ENCODE measurements at regions of chr17 and their contacts with region 1.

Region 1: DNA sequence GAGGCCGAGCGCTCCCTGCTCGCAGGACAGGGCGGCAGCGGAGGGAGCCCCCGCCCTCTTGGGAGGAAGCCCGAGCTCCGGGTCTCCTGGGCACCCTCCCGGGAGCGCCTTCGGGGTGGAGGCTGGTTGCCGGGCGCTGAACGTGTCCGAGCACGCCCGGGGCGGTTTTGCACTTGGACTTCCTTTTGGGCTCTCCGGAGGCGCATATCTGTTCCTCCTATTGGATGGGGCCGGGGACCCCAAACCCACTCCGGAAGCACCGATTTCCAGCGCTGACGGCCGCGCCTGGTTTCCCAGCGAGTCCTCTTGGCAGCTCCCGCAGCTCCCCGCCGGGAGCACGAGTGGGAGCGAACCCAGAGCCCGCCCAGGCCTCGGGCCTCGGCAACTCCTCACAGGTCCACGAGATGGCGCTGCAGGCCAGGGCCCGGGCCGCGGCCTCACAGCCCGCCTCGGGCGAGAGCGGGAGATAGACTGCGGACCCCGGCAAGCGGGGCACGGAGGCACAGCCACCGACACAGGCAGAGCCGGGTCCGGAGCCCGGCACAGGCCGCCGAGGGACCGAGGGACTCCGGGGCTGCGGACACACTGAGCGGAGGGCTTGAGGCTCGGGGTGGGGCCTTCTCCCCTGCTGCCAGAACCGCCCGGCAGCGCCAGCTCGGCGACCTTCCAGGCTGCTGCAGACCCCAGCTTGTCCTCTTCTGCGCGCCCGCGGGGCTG is 12.7 kb downstream of the TBX2 start:
- DNase-seq: peak; percentile 70 to 92
- H3K4me3 ChIP-seq: peak overlapping the region; percentile 66 to 74
- H3K27ac ChIP-seq: peak overlapping the region; percentile 98
- H3K4me1 ChIP-seq: peaks cover 0 to 76% (median 59%) of the 10 kb centered on the region in 4 donors
- H3K27me3 ChIP-seq: no peaks in the 10 kb centered on the region
- CTCF ChIP-seq: peak; percentile 98

Region 2: DNA sequence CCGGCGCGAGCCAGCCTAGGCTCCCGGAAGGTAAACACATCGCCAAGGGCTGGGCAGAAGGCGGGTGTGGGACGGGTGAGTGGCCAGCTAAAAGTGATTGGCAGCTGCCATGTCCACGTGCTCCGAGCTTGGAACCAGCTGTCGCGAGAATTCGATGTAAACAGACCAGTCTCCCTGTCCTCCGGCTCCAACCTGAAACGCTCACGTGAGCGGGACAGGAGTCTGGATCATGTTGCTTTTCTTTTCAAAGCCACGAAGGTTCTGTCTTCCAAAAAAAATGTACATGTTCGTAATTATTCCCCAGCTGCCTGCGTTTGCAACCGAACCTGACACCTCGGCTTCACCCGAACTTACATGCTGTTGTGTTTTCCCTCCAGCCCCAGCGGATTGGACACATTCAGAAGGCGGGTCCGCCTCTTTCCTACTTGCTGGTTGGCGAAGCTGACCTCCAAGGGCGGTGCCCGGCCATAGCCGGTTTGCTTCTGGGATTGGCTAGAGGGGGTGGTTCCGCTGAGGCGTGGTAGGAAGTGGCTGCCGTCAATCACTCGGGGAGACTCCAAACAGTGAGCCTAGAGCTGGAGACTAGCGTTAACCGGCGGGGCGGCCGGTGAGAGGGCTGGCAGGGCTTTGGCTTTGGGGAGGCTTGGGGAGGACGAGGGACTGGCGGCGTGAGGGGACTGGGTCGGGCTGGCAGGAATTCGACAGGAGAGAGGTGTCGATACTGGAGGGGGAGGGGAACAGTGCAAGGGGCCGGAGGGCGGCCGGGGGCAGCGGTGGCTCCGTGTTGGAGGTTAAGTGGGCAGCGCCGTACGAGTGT is 734.8 kb before region 1 on chr17 and contains the start of gene BCAS3:
- intact Hi-C with region 1: loop called (anchors 5 kb)
- DNase-seq: peak; percentile 99
- H3K4me3 ChIP-seq: peak within 1 kb of the TSS; percentile 67 to 91
- H3K27ac ChIP-seq: peak within 1 kb of the TSS; percentile 78 to 85
- H3K4me1 ChIP-seq: peaks cover 0 to 15% (median 5%) of the 10 kb centered on the region in 4 donors
- H3K27me3 ChIP-seq: no peaks in the 10 kb centered on the region
- CTCF ChIP-seq: peak in 1 of 2 experiments; percentile 8

Region 3: DNA sequence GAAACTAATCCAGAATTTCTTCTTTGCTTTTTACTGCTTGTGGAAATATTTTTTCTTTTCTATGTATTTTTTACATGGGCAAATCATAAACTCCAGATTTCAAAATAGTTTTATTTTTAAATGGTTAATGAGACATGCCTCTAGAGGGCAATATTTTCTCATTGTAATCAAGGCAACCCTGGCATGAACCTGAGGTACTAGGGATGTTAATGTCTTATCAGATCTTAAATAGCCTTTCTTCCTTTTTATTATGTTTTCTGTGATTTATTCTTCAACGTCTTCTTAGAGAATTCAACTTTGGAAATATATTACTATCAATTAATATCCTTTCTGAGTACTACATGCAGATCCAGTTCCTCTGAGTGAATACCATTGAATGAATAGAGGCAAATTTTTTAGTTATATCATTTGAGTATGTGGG is 410.0 kb before region 1 on chr17:
- intact Hi-C with region 1: loop called (anchors 5 kb)
- DNase-seq: no peak
- H3K4me3 ChIP-seq: no peak overlapping the region
- H3K27ac ChIP-seq: no peak overlapping the region
- H3K4me1 ChIP-seq: peaks cover 0 to 10% (median 0%) of the 10 kb centered on the region in 4 donors
- H3K27me3 ChIP-seq: no peaks in the 10 kb centered on the region
- CTCF ChIP-seq: peak; percentile 56 to 58

Region 4: DNA sequence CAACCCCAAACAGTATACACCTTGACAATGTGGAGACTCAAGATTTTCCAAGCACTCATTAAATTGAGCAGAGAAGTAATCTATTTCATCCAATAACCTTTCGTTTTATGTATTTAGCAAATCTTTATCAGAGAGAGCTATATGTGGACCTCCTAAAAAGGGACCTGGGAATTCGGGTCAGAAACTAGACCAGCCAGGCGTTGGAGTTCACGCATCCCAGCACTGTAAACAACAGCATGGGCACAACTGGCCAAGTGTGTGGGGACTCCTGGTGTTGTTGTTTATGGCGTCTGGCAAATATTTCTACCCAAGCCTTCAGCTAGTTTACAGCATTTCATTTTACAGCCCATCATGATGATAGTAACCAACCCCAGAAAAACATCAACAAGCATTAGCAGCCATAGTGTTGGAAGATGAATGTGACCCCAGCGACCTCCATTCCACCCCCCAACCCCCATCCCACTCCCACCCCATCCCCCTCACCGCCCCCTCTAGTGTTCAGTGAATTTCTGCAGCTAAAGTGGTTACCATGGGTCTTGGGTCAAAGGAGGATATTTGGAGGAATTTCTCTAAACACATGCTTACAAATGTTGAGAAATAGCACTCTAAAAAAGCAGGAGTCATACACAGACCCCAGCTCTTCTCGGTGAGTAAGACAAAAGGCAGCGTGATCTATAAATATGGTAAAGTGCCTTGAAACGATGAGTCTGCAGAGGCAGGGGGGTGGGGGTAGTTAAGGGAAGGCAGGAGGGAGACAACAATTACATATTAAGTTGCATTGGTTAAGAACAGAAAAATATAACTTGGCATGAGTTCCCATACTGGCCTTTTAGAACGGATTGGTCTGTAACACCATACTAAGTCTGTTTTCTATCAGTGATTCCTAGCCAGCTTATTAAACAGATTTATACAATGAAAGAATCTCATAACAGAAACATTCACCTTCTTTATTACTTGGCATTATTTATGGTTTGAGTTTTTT is 104.1 kb before region 1 on chr17:
- intact Hi-C with region 1: no loop called
- DNase-seq: no peak
- H3K4me3 ChIP-seq: no peak overlapping the region
- H3K27ac ChIP-seq: no peak overlapping the region
- H3K4me1 ChIP-seq: peaks cover 0 to 30% (median 6%) of the 10 kb centered on the region in 4 donors
- H3K27me3 ChIP-seq: no peaks in the 10 kb centered on the region
- CTCF ChIP-seq: no peak

Region 5: GRCh38 chr17:61551255-61551742 is 139.0 kb after region 1 on chr17:
- intact Hi-C with region 1: loop called (anchors 2 kb)
- DNase-seq: no peak
- H3K4me3 ChIP-seq: no peak overlapping the region
- H3K27ac ChIP-seq: no peak overlapping the region
- H3K4me1 ChIP-seq: no peaks in the 10 kb centered on the region
- H3K27me3 ChIP-seq: peaks cover 0 to 3% of the 10 kb centered on the region in 2 donors
- CTCF ChIP-seq: peak; percentile 68 to 71

Region 6: DNA sequence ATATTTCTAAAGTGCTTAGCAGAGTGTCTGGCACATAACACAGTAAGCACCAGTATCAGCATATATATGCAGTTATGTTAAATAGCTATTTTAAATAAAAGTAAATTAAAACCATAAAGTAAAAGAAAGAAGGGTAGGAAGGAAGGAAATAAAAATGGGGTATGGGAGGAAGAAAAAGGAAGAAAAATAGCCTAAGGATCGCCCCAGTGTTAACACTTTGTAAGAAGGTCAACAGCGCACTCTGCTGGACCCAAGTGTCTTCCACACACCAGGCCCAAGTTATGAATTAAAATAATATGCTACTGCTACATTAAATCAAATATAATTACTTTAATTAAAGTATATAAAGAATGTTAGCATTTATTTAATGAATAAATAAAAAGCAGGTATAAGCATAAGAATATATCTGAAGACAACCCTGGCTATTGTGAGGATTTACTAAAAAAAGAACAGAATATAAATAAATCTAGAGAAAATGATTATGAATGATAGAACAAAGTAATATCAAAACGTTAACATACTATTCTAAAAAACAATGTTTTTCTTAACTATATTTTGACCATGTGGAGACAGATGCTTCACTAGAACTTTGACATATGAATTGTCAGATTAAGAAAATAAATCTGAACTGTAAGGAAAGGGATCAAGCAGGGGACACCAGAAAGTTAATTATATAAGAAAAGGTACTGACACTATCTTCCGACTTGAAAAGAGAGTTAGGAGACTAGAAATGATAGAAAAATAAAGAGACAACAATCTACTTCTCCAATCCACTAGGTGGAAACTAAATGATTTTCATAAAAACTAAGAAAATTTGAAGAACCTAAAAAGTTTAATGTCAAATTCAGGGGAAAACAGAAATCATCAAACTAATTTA is 425.1 kb after region 1 on chr17:
- intact Hi-C with region 1: loop called (anchors 10 kb)
- DNase-seq: peak in 1 of 2 donors; percentile 31
- H3K4me3 ChIP-seq: no peak overlapping the region
- H3K27ac ChIP-seq: no peak overlapping the region
- H3K4me1 ChIP-seq: no peaks in the 10 kb centered on the region
- H3K27me3 ChIP-seq: no peaks in the 10 kb centered on the region
- CTCF ChIP-seq: peak; percentile 34 to 45

Region 7: DNA sequence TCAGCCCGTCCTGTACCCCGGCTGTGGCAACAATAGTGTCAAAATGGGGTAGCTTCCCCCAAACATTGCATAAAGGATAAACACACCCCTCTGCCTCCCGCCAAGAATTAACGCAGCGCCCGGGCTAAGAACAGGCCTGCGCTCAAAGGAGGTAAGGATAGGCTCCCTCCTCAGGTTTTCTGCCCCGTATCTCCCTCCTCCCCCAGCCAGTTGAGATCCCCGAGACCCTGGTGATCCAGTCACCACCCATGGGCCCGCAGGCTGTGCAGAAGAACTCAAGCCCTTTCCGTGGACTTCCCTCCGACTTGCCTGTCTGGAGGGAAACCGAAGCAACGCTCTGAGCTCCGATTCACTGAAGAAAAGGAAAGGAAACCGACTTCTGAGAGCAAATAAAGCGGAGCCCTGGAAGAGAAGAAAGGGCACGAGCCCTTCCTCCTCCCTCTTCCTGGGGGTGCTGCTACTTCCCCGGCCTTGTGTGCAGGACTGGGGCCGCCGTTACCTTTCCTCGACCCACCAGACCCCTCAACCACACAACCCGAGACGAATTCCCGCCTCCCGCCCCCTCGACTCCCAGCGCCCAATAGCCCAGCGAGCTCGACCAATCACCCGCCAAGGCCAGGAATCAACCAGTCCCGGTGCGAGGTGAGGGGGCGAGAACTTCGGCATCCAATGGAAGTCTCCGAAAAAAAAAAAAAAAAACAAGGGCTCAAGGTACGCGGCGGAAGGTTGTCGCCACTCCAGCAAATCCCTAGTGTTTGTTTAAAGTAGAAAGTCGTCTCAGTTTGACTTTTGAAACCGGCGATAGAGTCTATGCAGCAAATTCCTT is 450.9 kb after region 1 on chr17 and contains the start of gene BRIP1:
- intact Hi-C with region 1: loop called (anchors 10 kb)
- DNase-seq: peak; percentile 94
- H3K4me3 ChIP-seq: peak within 1 kb of the TSS; percentile 62 to 67
- H3K27ac ChIP-seq: peak within 1 kb of the TSS; percentile 67 to 71
- H3K4me1 ChIP-seq: peaks cover 0 to 8% (median 6%) of the 10 kb centered on the region in 4 donors
- H3K27me3 ChIP-seq: no peaks in the 10 kb centered on the region
- CTCF ChIP-seq: no peak

Region 8: GRCh38 chr17:62065598-62066468 is 653.5 kb after region 1 on chr17:
- intact Hi-C with region 1: loop called (anchors 5 kb)
- DNase-seq: peak; percentile 99
- H3K4me3 ChIP-seq: peak overlapping the region; percentile 68 to 99
- H3K27ac ChIP-seq: peak overlapping the region; percentile 93 to 98
- H3K4me1 ChIP-seq: peaks cover 0 to 29% (median 24%) of the 10 kb centered on the region in 4 donors
- H3K27me3 ChIP-seq: no peaks in the 10 kb centered on the region
- CTCF ChIP-seq: peak; percentile 90 to 91